Activated CD4-positive, alpha-beta T cell treated with anti-CD3 and anti-CD28 coated beads, Interleukin-2, amount 10 ng/mL, durations not matched to agents 7 days and 5 days (primary cell): ENCODE measurements at regions of chr17 and their contacts with region 1.

Region 1: GRCh38 chr17:35969558-35970380 is 11.5 kb downstream of the CCL16 start:
- DNase-seq: peak; percentile 82
- H3K4me3 Mint-ChIP-seq: no peak overlapping the region
- H3K27ac Mint-ChIP-seq: no peak overlapping the region
- H3K4me1 Mint-ChIP-seq: no peaks in the 10 kb centered on the region
- H3K27me3 Mint-ChIP-seq: peaks cover 8% of the 10 kb centered on the region

Region 2: GRCh38 chr17:35816723-35817122 is 153.0 kb before region 1 on chr17:
- CTCF ChIA-PET with region 1: no interaction called
- POLR2A ChIA-PET with region 1: interaction called, 10 read pairs
- DNase-seq: no peak
- H3K4me3 Mint-ChIP-seq: no peak overlapping the region
- H3K27ac Mint-ChIP-seq: no peak overlapping the region
- H3K4me1 Mint-ChIP-seq: peaks cover 54% of the 10 kb centered on the region
- H3K27me3 Mint-ChIP-seq: no peaks in the 10 kb centered on the region

Region 3: DNA sequence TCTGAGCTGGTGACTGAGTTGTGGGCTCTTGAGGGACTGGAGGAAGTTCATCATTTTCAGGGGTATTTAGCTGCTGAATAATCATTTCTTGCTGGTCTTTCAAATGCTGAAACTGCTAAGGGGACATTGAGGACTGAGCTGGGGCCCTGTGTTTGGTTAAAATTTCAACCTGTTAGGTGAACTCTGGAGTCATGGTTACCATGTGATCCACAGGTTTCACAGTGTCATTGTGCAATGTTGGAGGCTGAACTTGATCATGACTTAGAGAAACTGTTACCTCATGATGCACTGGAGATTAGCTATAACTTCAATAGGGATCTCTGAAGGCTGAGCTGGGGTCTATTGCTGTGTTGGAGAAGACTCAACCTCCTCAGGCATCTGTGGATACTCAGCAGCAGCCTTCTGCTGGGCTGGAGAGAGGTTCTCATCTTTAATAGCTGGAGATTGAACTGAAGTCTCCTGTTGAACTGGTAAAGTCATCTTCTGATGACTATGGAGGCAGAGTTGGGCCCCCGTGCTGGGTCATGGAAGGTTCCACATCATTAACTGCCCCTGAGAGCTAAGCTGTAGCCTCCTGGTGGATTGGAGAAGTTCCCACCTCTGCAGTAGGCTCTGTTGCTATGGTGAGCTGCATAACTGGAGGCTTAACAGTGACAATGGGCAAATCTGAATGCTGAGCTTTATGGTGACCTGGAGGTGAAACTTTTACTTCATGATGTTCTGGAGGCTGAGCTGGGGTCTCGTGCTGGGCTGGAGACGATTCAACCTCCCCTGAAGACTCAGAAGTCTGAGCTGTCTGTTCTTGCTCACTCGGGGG is 54.4 kb before region 1 on chr17:
- CTCF ChIA-PET with region 1: no interaction called
- POLR2A ChIA-PET with region 1: no interaction called
- DNase-seq: no peak
- H3K4me3 Mint-ChIP-seq: no peak overlapping the region
- H3K27ac Mint-ChIP-seq: no peak overlapping the region
- H3K4me1 Mint-ChIP-seq: peaks cover 22% of the 10 kb centered on the region
- H3K27me3 Mint-ChIP-seq: no peaks in the 10 kb centered on the region

Region 4: GRCh38 chr17:35942588-35943186 is 27.1 kb before region 1 on chr17:
- CTCF ChIA-PET with region 1: no interaction called
- POLR2A ChIA-PET with region 1: no interaction called
- DNase-seq: no peak
- H3K4me3 Mint-ChIP-seq: no peak overlapping the region
- H3K27ac Mint-ChIP-seq: no peak overlapping the region
- H3K4me1 Mint-ChIP-seq: peaks cover 8% of the 10 kb centered on the region
- H3K27me3 Mint-ChIP-seq: peaks cover 6% of the 10 kb centered on the region

Region 5: GRCh38 chr17:35953720-35954119 is 16.0 kb before region 1 on chr17:
- CTCF ChIA-PET with region 1: interaction called, 10 read pairs
- POLR2A ChIA-PET with region 1: no interaction called
- DNase-seq: no peak
- H3K4me3 Mint-ChIP-seq: no peak overlapping the region
- H3K27ac Mint-ChIP-seq: no peak overlapping the region
- H3K4me1 Mint-ChIP-seq: no peaks in the 10 kb centered on the region
- H3K27me3 Mint-ChIP-seq: peaks cover 39% of the 10 kb centered on the region

Region 6: GRCh38 chr17:36148559-36149295 is 179.0 kb after region 1 on chr17:
- CTCF ChIA-PET with region 1: interaction called, 15 read pairs
- POLR2A ChIA-PET with region 1: no interaction called
- DNase-seq: peak; percentile 63
- H3K4me3 Mint-ChIP-seq: no peak overlapping the region
- H3K27ac Mint-ChIP-seq: no peak overlapping the region
- H3K4me1 Mint-ChIP-seq: no peaks in the 10 kb centered on the region
- H3K27me3 Mint-ChIP-seq: peaks cover 27% of the 10 kb centered on the region